Lower leg skin (tissue), 4 donors: ENCODE measurements at regions of chr7 and their contacts with region 1.

Region 1: DNA sequence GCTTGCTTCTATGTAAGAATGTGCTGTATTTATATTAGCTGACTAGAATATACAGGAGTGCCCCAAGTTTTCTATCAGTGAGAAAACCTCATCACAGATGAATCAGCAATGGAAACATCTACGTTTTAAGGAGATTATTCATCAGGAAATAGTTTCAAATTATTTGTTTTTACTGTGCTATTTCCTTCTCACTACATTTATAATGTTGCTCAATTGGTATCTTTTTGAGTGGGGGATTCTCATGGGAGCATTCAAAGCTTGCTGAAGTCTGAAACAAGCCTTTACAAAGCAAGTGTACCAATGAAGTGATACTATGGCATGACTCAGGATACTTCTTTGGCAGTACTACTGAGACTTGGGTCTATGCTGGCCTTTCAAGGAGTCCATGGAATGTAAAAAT is 191.1 kb upstream of the SLC26A5 start:
- DNase-seq: no peak
- H3K4me3 ChIP-seq: no peak overlapping the region
- CTCF ChIP-seq: no peak
- POLR2A ChIP-seq: no peak

Region 2: GRCh38 chr7:104341546-104341945 is 704.5 kb after region 1 on chr7:
- intact Hi-C with region 1: loop called (anchors 10 kb)
- DNase-seq: no peak
- H3K4me3 ChIP-seq: no peak overlapping the region
- CTCF ChIP-seq: no peak
- POLR2A ChIP-seq: no peak